ENCODE measurements at regions of chr15 and their contacts with region 1.

Region 1: GRCh38 chr15:48385031-48385830 is 54.0 kb downstream of the DUT start:
- DNase-seq: no peak
- H3K4me3 ChIP-seq: no peak overlapping the region
- H3K27ac ChIP-seq: no peak overlapping the region
- H3K4me1 ChIP-seq: no peaks in the 10 kb centered on the region
- H3K27me3 ChIP-seq: no peaks in the 10 kb centered on the region
- CTCF ChIP-seq: no peak
- EP300 ChIP-seq: no peak
- POLR2A ChIP-seq: no peak
- RAD21 ChIP-seq: no peak

Region 2: DNA sequence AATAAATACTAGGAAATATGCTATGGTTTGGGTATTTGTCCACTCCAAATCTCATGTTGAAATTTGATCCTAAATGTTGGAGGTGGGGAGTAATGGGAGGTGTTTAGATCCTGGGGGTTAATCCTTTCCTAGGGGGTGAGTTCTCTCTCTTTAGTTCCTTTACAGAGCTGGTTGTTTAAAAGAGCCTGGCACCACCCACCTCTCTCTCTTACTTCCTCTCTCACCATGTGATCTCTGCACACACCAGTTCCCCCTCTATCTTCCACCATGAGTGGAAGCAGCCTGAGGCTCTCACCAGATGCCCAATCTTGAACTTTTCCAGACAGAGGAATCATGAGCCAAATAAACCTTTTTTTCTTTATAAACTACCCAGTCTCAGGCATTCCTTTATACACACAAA is 253.9 kb before region 1 on chr15:
- CTCF ChIA-PET with region 1: no interaction called
- POLR2A ChIA-PET with region 1: no interaction called
- DNase-seq: no peak
- H3K4me3 ChIP-seq: no peak overlapping the region
- H3K27ac ChIP-seq: no peak overlapping the region
- H3K4me1 ChIP-seq: peaks cover 0 to 2% (median 0%) of the 10 kb centered on the region in 4 experiments; a peak in 1 of 7 replicates
- H3K27me3 ChIP-seq: no peaks in the 10 kb centered on the region
- CTCF ChIP-seq: no peak
- EP300 ChIP-seq: no peak
- POLR2A ChIP-seq: no peak
- RAD21 ChIP-seq: no peak

Region 3: GRCh38 chr15:48190932-48191573 is 194.2 kb before region 1 on chr15:
- CTCF ChIA-PET with region 1: no interaction called
- POLR2A ChIA-PET with region 1: no interaction called
- DNase-seq: peak in 1 of 2 experiments; percentile 95
- H3K4me3 ChIP-seq: peak overlapping the region; percentile 39 to 62 (median 48); a peak in 7 of 8 replicates
- H3K27ac ChIP-seq: no peak overlapping the region
- H3K4me1 ChIP-seq: no peaks in the 10 kb centered on the region
- H3K27me3 ChIP-seq: peaks cover 0 to 9% (median 0%) of the 10 kb centered on the region in 4 experiments; a peak in 2 of 7 replicates
- CTCF ChIP-seq: no peak
- EP300 ChIP-seq: 0 out of 3 replicates have a peak, but pooled peaks of 1 of the 2 experiments have one; percentile 17
- POLR2A ChIP-seq: no peak
- RAD21 ChIP-seq: peak in 1 of 2 experiments; percentile 19; a peak in 1 of 4 replicates

Region 4: GRCh38 chr15:48373821-48374451 is 11.3 kb before region 1 on chr15:
- CTCF ChIA-PET with region 1: interaction called, 10 read pairs
- POLR2A ChIA-PET with region 1: no interaction called
- DNase-seq: no peak
- H3K4me3 ChIP-seq: no peak overlapping the region
- H3K27ac ChIP-seq: no peak overlapping the region
- H3K4me1 ChIP-seq: no peaks in the 10 kb centered on the region
- H3K27me3 ChIP-seq: no peaks in the 10 kb centered on the region
- CTCF ChIP-seq: no peak
- EP300 ChIP-seq: no peak
- POLR2A ChIP-seq: no peak
- RAD21 ChIP-seq: no peak

Region 5: DNA sequence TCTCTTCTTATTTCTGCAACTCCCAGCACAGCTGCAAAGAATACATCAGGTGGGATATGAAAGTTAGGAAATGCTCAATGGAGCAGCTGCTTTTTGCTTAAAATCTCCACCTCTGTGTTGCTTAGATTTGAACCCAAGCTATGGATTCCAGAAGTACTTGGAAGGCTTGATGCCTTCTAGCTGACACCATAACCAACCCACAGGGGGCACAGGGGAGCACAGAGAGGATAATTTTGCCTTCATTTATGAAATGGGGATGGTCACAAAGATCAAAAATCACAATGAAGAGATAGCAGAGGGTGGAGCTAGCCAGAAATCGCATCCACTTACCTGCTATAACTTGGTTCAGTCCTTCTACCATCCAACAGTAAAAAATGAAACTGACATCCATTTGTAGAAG is 21.7 kb after region 1 on chr15:
- CTCF ChIA-PET with region 1: interaction called, 23 read pairs
- POLR2A ChIA-PET with region 1: no interaction called
- DNase-seq: no peak
- H3K4me3 ChIP-seq: no peak overlapping the region
- H3K27ac ChIP-seq: no peak overlapping the region
- H3K4me1 ChIP-seq: no peaks in the 10 kb centered on the region
- H3K27me3 ChIP-seq: no peaks in the 10 kb centered on the region
- CTCF ChIP-seq: peak in 2 of 3 experiments; percentile 37 to 52; a peak in 2 of 4 replicates
- EP300 ChIP-seq: no peak
- POLR2A ChIP-seq: no peak
- RAD21 ChIP-seq: peak; percentile 24 to 48; a peak in 3 of 4 replicates

Region 6: DNA sequence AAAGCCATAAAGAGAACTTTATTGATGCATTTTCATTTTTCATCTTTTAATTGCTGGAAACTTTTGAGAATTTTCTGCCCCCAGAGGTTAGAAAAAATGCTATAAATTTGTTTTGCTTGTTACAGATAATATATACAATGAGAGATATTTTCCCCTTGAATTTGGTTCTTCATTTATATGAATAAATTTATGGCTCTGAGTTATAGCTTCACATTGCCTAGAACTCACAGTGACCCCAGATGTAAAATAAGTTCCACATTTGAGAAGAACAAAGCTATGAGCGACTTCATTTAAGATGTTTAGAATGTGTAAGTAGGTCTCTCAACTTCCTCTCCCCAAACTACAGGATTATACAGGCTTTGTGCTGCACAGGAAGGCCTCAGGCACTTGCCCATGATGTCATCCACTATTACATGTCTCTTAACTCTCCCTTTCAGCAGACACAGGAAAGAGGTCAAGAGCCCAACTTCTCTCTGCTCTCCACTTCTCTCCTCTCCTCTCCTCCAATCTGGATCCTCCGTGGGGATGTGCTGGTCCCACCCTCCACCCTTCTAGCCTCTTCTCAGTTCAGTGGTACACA is 38.8 kb after region 1 on chr15:
- CTCF ChIA-PET with region 1: no interaction called
- POLR2A ChIA-PET with region 1: no interaction called
- DNase-seq: no peak
- H3K4me3 ChIP-seq: no peak overlapping the region
- H3K27ac ChIP-seq: no peak overlapping the region
- H3K4me1 ChIP-seq: peaks cover 2 to 7% (median 3%) of the 10 kb centered on the region in 4 experiments; a peak in 4 of 7 replicates
- H3K27me3 ChIP-seq: no peaks in the 10 kb centered on the region
- CTCF ChIP-seq: no peak
- EP300 ChIP-seq: no peak
- POLR2A ChIP-seq: no peak
- RAD21 ChIP-seq: no peak